GM10248 (cell line): ENCODE measurements at regions of chr1 and their contacts with region 1.

Region 1: GRCh38 chr1:160550572-160551034 is 27.5 kb upstream of the SLAMF6 start:
- DNase-seq: no peak
- CTCF ChIP-seq: peak; percentile 34

Region 2: GRCh38 chr1:160567858-160568682 is 17.5 kb after region 1 on chr1:
- CTCF ChIA-PET with region 1: interaction called, 163 read pairs
- POLR2A ChIA-PET with region 1: no interaction called
- DNase-seq: no peak
- CTCF ChIP-seq: no peak

Region 3: GRCh38 chr1:160575112-160575664 is 24.6 kb after region 1 on chr1:
- CTCF ChIA-PET with region 1: interaction called, 163 read pairs
- POLR2A ChIA-PET with region 1: no interaction called
- DNase-seq: peak; percentile 22
- CTCF ChIP-seq: no peak